ENCODE measurements at regions of chr3 and their contacts with region 1.

Region 1: DNA sequence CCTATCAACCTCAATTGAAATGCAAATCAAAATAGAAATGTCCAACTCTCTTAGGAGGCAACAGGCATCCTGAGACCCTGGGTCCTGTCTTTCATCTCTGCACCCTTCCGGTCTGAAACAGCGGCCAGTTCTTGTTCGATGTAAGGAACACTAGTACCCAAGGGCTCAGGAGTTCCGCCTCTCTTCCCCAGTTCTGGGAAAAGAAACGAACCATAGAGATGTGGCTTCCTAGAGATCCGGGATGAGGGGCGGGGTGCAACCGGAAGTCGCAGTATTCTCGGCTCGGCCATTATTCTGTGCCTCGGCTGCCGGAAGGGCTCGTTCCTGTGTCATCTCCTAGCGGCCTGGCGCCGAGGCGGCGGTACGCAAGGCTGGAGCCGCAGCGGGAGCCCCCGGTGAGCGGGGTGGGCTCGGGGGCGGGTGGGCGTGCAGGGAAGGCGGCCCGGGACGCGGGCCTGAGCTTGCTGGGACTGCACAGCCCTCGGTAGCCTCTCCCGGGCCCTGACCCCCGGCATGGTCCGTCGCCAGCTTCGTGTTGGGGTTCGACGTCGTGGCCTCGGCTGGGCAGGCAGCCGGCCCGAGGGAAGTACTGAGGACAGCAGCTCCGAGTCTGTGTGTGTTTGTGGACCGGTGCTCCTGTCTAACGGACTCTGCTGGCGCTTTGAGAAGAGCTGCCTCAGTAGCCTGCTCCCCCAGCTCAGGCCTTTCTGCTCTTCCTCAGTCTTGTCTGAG is at the start of gene ZNF197:
- DNase-seq: peak; percentile 92
- total RNA-seq, gene ZNF197: 13.6 TPM

Region 2: DNA sequence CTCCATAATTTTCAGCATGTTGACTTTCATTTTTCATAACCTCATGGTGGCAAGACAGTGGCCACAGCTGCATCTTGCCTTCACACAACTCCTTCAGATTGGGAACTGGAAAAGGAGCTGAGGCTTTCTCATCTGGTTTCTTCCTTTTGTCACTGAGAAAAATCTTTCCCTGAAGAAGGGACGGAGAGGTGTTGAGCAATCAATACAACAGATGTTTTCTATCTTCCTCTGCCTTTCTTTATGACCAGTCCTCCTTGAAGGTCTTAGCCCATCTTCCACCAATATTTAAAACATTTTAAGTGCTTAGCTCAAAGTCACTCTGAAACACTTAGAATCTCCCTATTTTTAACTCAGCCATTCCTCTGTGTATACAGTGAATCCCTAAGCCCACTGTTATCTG is 28.3 kb before region 1 on chr3:
- intact Hi-C with region 1: no loop called
- DNase-seq: no peak

Region 3: GRCh38 chr3:44648564-44649229 is 23.8 kb after region 1 on chr3 and contains the start of gene ZNF35:
- intact Hi-C with region 1: loop called (anchors 1 kb)
- DNase-seq: peak; percentile 89
- total RNA-seq, gene ZNF35: 6.6 TPM

Region 4: DNA sequence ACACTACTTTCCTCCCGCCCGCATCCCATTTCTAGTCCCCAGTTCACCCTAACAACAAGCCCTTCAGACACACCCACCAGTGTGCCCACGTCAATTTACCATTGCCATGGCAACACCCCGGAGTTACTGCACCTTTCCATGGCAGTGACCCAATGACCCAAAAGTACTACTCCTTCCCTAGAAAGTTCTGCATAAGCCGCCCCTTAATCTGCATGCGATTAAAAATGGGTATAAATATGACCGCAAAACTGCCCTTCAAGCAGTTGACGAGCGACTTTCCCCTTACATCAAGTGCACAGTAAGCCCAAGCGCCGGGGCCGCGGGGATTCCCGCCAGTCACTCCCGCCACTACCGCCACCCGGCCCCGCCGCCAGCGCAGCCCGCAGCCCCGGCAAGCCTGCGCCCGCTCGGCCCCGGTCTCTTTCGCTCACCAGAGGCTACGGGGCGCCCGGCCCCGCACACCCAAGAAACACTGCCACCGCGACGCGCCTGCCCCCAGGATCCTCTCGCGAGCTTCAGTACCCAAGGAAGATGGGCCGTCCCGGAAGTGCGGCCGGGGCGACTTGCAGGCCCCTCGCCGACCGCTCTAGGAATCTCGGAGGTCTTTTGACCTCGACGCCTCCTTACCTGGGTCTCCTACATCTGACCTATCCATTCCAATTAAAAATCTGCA is 60.3 kb after region 1 on chr3:
- intact Hi-C with region 1: loop called (anchors 5 kb)
- DNase-seq: peak; percentile 83

Region 5: DNA sequence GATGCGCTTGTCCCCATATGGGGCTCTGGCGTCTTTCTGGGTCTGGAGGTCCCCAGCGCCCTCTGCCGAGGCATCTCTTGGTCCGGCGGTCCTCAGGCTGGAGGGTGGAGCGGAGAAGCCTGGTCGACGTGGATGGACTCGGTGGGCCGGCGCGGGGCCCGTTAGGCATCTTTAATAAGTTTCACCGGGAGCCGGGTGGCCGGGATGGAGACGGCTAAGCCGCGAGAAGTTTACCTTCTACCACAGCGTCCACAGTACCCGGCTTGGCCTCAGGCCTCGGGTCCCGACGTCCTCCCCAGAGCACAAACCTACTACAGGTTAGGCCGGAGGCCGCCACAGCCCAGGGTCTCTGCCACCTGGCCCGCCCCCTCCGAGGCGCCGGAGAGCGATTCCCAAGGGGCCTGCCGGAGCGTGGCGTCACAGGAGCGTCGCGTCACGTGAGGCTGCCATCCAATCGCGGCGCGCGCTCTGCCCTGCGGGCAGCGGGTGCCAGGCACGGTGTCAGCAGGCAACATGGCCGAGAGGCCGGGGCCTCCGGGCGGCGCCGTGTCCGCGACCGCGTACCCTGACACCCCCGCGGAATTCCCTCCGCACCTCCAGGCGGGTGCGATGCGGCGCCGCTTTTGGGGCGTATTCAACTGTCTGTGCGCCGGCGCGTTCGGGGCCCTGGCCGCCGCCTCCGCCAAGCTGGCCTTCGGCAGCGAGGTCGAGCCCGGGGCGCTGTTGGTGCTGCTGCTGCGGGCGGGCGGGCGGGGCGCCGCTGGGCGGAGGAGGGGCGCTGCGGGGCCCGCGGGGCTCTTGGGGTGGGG is 236.7 kb after region 1 on chr3 and contains the start of gene TMEM42:
- intact Hi-C with region 1: loop called (anchors 10 kb)
- DNase-seq: peak; percentile 96
- total RNA-seq, gene TMEM42: 10.5 TPM

Measured in cardiac septum (tissue), 1 donor.